SK-N-SH (cell line): ENCODE measurements at regions of chr3 and their contacts with region 1.

Region 1: GRCh38 chr3:132210476-132211346 is 106.5 kb upstream of the ACP3 start:
- DNase-seq: peak; percentile 8
- H3K4me3 ChIP-seq: no peak overlapping the region
- H3K27ac ChIP-seq: no peak overlapping the region
- H3K4me1 ChIP-seq: no peaks in the 10 kb centered on the region
- H3K27me3 ChIP-seq: no peaks in the 10 kb centered on the region
- CTCF ChIP-seq: peak; percentile 53
- EP300 ChIP-seq: no peak
- RAD21 ChIP-seq: peak; percentile 55

Region 2: GRCh38 chr3:131526801-131527347 is 683.8 kb before region 1 on chr3:
- CTCF ChIA-PET with region 1: no interaction called
- POLR2A ChIA-PET with region 1: no interaction called
- DNase-seq: no peak
- H3K4me3 ChIP-seq: no peak overlapping the region
- H3K27ac ChIP-seq: no peak overlapping the region
- H3K4me1 ChIP-seq: no peaks in the 10 kb centered on the region
- H3K27me3 ChIP-seq: no peaks in the 10 kb centered on the region
- CTCF ChIP-seq: no peak
- EP300 ChIP-seq: no peak
- RAD21 ChIP-seq: no peak

Region 3: DNA sequence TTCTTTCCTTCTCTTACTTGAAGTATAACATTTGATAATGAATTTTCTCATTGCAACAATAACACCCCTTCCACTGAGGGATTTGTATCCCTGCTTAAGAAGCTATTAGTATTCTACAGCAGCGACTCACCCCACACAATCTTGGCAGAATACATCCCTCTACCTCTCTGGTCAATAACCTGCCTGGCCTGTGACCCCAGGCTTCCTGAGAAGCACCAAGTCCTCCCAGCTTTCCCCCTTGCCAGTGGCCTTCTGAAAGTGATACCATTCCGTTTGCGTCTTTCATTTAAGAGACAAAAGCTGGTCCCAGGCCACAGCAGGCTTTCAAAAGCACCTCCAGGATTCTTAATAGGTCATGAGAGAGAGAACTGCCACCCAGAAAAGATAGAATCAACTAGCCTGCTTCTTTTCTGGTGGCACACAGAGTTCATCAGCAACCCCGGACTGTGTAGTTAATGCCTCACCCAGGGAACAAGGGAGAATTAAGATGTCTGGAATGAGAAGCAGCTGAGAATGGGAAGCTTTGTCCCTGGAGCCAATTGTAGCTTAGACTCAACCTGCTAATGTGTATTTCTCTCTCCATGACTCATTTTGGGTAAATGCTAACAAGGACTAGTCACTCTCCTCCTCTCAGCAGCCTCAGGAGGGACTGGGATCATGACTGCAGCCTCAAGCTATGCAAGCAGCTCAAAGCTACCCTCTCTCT is 74.9 kb before region 1 on chr3:
- CTCF ChIA-PET with region 1: no interaction called
- POLR2A ChIA-PET with region 1: no interaction called
- DNase-seq: peak; percentile 13
- H3K4me3 ChIP-seq: peak overlapping the region; percentile 17 to 53; a peak in 3 of 4 replicates
- H3K27ac ChIP-seq: peak overlapping the region in 1 of 2 experiments; percentile 98; a peak in 2 of 4 replicates
- H3K4me1 ChIP-seq: peaks cover 0 to 17% of the 10 kb centered on the region in 2 experiments; a peak in 2 of 4 replicates
- H3K27me3 ChIP-seq: no peaks in the 10 kb centered on the region
- CTCF ChIP-seq: no peak
- EP300 ChIP-seq: peak in 1 of 2 experiments; percentile 78; a peak in 2 of 4 replicates
- RAD21 ChIP-seq: no peak

Region 4: GRCh38 chr3:132199451-132199850 is 11.3 kb before region 1 on chr3:
- CTCF ChIA-PET with region 1: interaction called, 14 read pairs
- POLR2A ChIA-PET with region 1: no interaction called
- DNase-seq: no peak
- H3K4me3 ChIP-seq: no peak overlapping the region
- H3K27ac ChIP-seq: no peak overlapping the region
- H3K4me1 ChIP-seq: peaks cover 0 to 3% of the 10 kb centered on the region in 2 experiments; a peak in 1 of 4 replicates
- H3K27me3 ChIP-seq: no peaks in the 10 kb centered on the region
- CTCF ChIP-seq: no peak
- EP300 ChIP-seq: no peak
- RAD21 ChIP-seq: no peak

Region 5: GRCh38 chr3:132222868-132223538 is 12.3 kb after region 1 on chr3:
- CTCF ChIA-PET with region 1: interaction called, 29 read pairs
- POLR2A ChIA-PET with region 1: no interaction called
- DNase-seq: peak; percentile 8
- H3K4me3 ChIP-seq: no peak overlapping the region
- H3K27ac ChIP-seq: peak overlapping the region in 1 of 2 experiments; percentile 1; a peak in 1 of 4 replicates
- H3K4me1 ChIP-seq: peaks cover 0 to 7% of the 10 kb centered on the region in 2 experiments; a peak in 1 of 4 replicates
- H3K27me3 ChIP-seq: no peaks in the 10 kb centered on the region
- CTCF ChIP-seq: no peak
- EP300 ChIP-seq: no peak
- RAD21 ChIP-seq: no peak